Natural killer cell (primary cell): ENCODE measurements at regions of chr10 and their contacts with region 1.

Region 1: GRCh38 chr10:43689955-43690771 is 41.5 kb upstream of the ZNF32 start:
- DNase-seq: peak; percentile 87 to 88
- ATAC-seq: peak; percentile 99
- H3K4me3 ChIP-seq: peak overlapping the region; percentile 57
- H3K4me3 Mint-ChIP-seq: peak overlapping the region; percentile 91
- H3K27ac ChIP-seq: peak overlapping the region; percentile 36
- H3K27ac Mint-ChIP-seq: peak overlapping the region; percentile 73 to 83
- H3K4me1 ChIP-seq: peaks cover 12% of the 10 kb centered on the region
- H3K4me1 Mint-ChIP-seq: peaks cover 10 to 22% of the 10 kb centered on the region in 2 donors
- H3K27me3 ChIP-seq: no peaks in the 10 kb centered on the region
- H3K27me3 Mint-ChIP-seq: peaks cover 7 to 27% of the 10 kb centered on the region in 2 donors
- CTCF ChIP-seq: peak; percentile 93

Region 2: DNA sequence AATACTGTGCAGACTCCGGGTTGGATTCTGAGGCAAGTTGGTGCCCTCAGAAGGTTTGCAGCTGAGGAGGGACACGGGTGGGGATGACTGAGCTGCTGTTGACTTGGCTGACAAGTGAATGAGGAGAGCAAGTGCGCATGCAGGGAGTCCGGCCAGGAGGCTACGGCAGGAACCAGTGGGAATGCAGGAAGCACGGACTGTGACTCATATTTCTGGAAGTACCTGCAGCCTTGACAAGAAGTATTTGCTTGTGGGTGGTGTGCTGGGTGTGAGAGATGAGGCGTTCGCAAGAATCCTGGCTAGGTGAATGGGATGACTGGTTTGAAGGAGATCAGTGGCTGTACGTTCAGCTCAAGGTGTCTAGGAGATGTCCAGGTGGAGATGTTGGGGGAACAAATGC is 349.5 kb before region 1 on chr10:
- intact Hi-C with region 1: no loop called
- DNase-seq: no peak
- ATAC-seq: no peak
- H3K4me3 ChIP-seq: no peak overlapping the region
- H3K4me3 Mint-ChIP-seq: no peak overlapping the region
- H3K27ac ChIP-seq: no peak overlapping the region
- H3K27ac Mint-ChIP-seq: no peak overlapping the region
- H3K4me1 ChIP-seq: no peaks in the 10 kb centered on the region
- H3K4me1 Mint-ChIP-seq: peaks cover 0 to 5% of the 10 kb centered on the region in 2 donors
- H3K27me3 ChIP-seq: no peaks in the 10 kb centered on the region
- H3K27me3 Mint-ChIP-seq: peaks cover 25 to 30% of the 10 kb centered on the region in 2 donors
- CTCF ChIP-seq: no peak

Region 3: GRCh38 chr10:43353495-43354255 is 336.5 kb before region 1 on chr10:
- intact Hi-C with region 1: no loop called
- DNase-seq: no peak
- ATAC-seq: no peak
- H3K4me3 ChIP-seq: no peak overlapping the region
- H3K4me3 Mint-ChIP-seq: no peak overlapping the region
- H3K27ac ChIP-seq: no peak overlapping the region
- H3K27ac Mint-ChIP-seq: no peak overlapping the region
- H3K4me1 ChIP-seq: peaks cover 6% of the 10 kb centered on the region
- H3K4me1 Mint-ChIP-seq: peaks cover 7 to 12% of the 10 kb centered on the region in 2 donors
- H3K27me3 ChIP-seq: peaks cover 13% of the 10 kb centered on the region
- H3K27me3 Mint-ChIP-seq: peaks cover 6 to 16% of the 10 kb centered on the region in 2 donors
- CTCF ChIP-seq: no peak

Region 4: DNA sequence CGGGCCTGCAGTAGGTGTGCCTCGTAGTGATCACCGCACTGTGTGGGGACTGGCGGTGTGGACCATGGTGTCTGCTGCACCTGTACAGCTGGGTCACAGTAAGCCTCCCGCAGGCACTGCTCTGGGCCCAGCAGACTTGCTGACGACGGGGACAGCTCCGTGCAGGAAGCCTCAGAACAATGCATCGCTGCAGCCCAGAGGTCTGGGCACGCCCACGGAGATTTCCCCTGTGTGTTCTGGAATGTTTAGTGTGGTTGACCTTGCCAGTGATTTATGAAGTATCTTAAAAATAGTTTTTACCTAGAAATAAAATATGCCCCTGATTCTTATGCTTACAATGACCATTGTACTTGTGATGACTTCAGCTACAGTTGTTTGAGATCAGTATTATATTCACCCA is 17.6 kb after region 1 on chr10:
- intact Hi-C with region 1: no loop called
- DNase-seq: no peak
- ATAC-seq: no peak
- H3K4me3 ChIP-seq: no peak overlapping the region
- H3K4me3 Mint-ChIP-seq: no peak overlapping the region
- H3K27ac ChIP-seq: no peak overlapping the region
- H3K27ac Mint-ChIP-seq: no peak overlapping the region
- H3K4me1 ChIP-seq: no peaks in the 10 kb centered on the region
- H3K4me1 Mint-ChIP-seq: no peaks in the 10 kb centered on the region
- H3K27me3 ChIP-seq: no peaks in the 10 kb centered on the region
- H3K27me3 Mint-ChIP-seq: peaks cover 0 to 8% of the 10 kb centered on the region in 2 donors
- CTCF ChIP-seq: no peak

Region 5: GRCh38 chr10:44044549-44044948 is 354.4 kb after region 1 on chr10:
- intact Hi-C with region 1: loop called (anchors 5 kb)
- DNase-seq: no peak
- ATAC-seq: no peak
- H3K4me3 ChIP-seq: no peak overlapping the region
- H3K4me3 Mint-ChIP-seq: no peak overlapping the region
- H3K27ac ChIP-seq: no peak overlapping the region
- H3K27ac Mint-ChIP-seq: no peak overlapping the region
- H3K4me1 ChIP-seq: no peaks in the 10 kb centered on the region
- H3K4me1 Mint-ChIP-seq: no peaks in the 10 kb centered on the region
- H3K27me3 ChIP-seq: peaks cover 3% of the 10 kb centered on the region
- H3K27me3 Mint-ChIP-seq: peaks cover 17 to 47% of the 10 kb centered on the region in 2 donors
- CTCF ChIP-seq: no peak

Region 6: GRCh38 chr10:44310762-44311562 is 620.8 kb after region 1 on chr10:
- intact Hi-C with region 1: loop called (anchors 5 kb)
- DNase-seq: peak; percentile 77 to 82
- ATAC-seq: peak; percentile 75 to 93 (median 92)
- H3K4me3 ChIP-seq: peak overlapping the region; percentile 38
- H3K4me3 Mint-ChIP-seq: peak overlapping the region; percentile 83
- H3K27ac ChIP-seq: peak overlapping the region; percentile 99
- H3K27ac Mint-ChIP-seq: peak overlapping the region; percentile 84 to 92
- H3K4me1 ChIP-seq: peaks cover 33% of the 10 kb centered on the region
- H3K4me1 Mint-ChIP-seq: peaks cover 22 to 31% of the 10 kb centered on the region in 2 donors
- H3K27me3 ChIP-seq: no peaks in the 10 kb centered on the region
- H3K27me3 Mint-ChIP-seq: peaks cover 11 to 12% of the 10 kb centered on the region in 2 donors
- CTCF ChIP-seq: peak; percentile 75

Region 7: DNA sequence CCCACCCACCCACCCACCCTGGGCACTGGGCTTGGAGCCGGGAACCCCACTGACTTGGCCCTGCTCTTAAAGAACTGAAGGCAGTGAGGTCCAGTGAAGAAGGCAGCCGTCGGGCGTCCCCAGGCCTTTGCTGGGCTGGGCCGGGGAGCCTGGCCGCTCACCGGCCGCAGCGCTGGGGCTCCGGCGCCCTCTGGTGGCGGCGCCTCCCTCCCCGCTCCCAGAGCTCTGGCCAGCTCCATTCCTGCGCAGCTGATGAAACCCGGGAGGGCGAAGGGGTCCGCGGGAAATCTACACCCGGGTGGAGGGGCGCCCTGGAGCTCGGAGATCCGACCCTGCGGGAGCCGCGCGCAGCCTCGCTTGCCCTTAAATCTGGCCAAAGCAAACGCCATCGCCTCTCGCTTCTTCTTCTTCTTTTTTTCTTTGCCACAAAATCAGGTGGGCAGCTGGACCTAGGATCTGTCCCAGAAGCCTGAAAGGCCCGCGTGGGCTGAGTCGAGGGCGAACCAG is 696.4 kb after region 1 on chr10:
- intact Hi-C with region 1: loop called (anchors 1 kb)
- DNase-seq: peak; percentile 43 to 55
- ATAC-seq: peak in 2 of 3 donors; percentile 65 to 81
- H3K4me3 ChIP-seq: no peak overlapping the region
- H3K4me3 Mint-ChIP-seq: peak overlapping the region; percentile 59
- H3K27ac ChIP-seq: no peak overlapping the region
- H3K27ac Mint-ChIP-seq: no peak overlapping the region
- H3K4me1 ChIP-seq: peaks cover 3% of the 10 kb centered on the region
- H3K4me1 Mint-ChIP-seq: no peaks in the 10 kb centered on the region
- H3K27me3 ChIP-seq: peaks cover 23% of the 10 kb centered on the region
- H3K27me3 Mint-ChIP-seq: peaks cover 33 to 34% of the 10 kb centered on the region in 2 donors
- CTCF ChIP-seq: peak; percentile 65